HCT116 (cell line): ENCODE measurements at regions of chr20 and their contacts with region 1.

Region 1: DNA sequence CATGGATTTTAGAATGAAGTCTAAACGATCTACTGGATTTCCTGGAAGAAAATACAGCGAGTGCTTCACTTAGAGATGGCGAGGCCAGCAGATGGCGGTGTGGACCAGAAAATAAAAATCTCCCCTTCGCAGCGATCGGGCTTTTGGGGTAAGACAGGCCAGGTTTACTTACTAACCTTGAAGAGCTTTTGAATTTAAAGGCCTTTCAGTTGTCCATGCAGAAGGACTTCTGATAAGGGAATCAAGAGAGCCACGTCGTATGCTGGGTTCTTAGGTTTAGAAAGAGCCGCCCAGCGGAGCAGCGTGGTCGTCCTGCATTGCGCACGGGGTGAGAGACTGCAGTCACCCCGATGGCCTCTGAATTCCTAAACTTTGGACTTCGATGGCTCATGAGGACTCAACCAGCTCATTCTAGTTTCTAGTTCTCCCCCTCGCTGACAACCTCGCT is 125.2 kb upstream of the RALGAPA2 start:
- DNase-seq: peak; percentile 38
- ATAC-seq: peak; percentile 89
- H3K4me3 ChIP-seq: no peak overlapping the region
- H3K27ac ChIP-seq: no peak overlapping the region
- H3K4me1 ChIP-seq: no peaks in the 10 kb centered on the region
- H3K27me3 ChIP-seq: no peaks in the 10 kb centered on the region
- CTCF ChIP-seq: peak; percentile 61 to 87 (median 66); a peak in 5 of 6 replicates
- POLR2A ChIP-seq: no peak
- RAD21 ChIP-seq: peak; percentile 71

Region 2: GRCh38 chr20:21235484-21236445 is 398.2 kb after region 1 on chr20:
- CTCF ChIA-PET with region 1: interaction called, 7 read pairs
- POLR2A ChIA-PET with region 1: no interaction called
- RAD21 ChIA-PET with region 1: no interaction called
- intact Hi-C with region 1: loop called (anchors 2 kb)
- DNase-seq: peak; percentile 51
- ATAC-seq: peak; percentile 92
- H3K4me3 ChIP-seq: no peak overlapping the region
- H3K27ac ChIP-seq: no peak overlapping the region
- H3K4me1 ChIP-seq: peaks cover 0 to 6% of the 10 kb centered on the region in 2 experiments; a peak in 1 of 4 replicates
- H3K27me3 ChIP-seq: no peaks in the 10 kb centered on the region
- CTCF ChIP-seq: peak; percentile 84 to 97 (median 91); a peak in 5 of 6 replicates
- POLR2A ChIP-seq: no peak
- RAD21 ChIP-seq: peak; percentile 66

Region 3: DNA sequence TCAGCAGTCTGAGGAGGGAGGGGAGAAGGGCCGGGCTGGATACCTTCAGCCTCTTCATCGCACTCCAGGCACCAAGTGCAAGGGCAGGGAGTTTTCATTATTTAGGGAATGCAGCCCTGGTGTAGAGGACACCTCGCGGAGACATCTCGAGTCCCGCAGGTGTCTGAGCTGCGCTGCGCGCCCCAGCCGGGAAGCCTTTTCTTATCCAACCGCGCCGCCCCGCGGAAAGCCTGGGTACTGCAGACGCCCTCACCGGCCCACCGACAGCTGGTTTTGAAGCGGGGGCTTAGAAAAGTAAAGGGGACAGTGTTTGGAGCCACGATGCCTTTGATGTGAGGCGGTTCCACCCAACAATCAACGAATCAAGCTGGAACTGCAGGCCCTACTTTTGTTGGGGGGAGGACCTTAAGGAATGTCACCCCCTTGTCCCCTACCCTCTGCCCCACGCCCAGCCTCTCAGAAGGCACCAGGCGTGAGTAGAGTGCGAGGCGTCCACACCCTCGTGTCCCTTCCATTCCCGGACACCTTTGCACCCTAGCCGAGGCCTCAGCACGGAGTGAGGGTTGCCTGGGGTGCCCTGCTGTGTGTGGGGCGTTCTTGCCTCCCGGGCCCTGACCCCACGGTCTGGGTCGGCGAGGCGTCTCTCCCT is 667.7 kb after region 1 on chr20:
- CTCF ChIA-PET with region 1: interaction called, 23 read pairs
- POLR2A ChIA-PET with region 1: no interaction called
- RAD21 ChIA-PET with region 1: no interaction called
- intact Hi-C with region 1: loop called (anchors 1 kb)
- DNase-seq: peak; percentile 28
- ATAC-seq: peak; percentile 60
- H3K4me3 ChIP-seq: peak overlapping the region; percentile 60 to 71
- H3K27ac ChIP-seq: peak overlapping the region; percentile 85
- H3K4me1 ChIP-seq: peaks cover 3 to 20% of the 10 kb centered on the region in 2 experiments; a peak in 3 of 4 replicates
- H3K27me3 ChIP-seq: no peaks in the 10 kb centered on the region
- CTCF ChIP-seq: peak; percentile 90 to 98 (median 95)
- POLR2A ChIP-seq: no peak
- RAD21 ChIP-seq: peak; percentile 96

Region 4: DNA sequence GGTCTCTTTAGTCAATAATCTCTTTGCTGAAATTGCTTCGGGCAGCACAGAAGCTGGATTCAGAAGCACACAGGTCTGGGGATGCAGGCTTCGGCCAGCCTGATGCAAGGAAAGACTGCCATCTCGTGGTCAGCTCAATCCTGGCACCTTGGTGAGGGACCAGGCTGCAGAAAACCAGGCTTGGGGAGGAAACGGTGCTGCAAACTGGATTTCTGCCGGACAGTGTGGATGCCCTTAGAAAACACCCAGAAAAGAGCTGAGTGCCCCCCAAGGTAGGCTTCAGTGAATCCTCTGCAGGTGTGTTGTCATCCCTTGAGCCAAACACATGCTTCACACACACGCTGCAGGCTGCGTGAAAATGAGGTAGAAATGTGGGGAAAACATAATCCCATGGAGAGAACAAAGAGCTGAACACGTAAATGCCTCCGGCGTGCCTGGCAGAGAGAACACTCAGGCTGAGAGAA is 778.1 kb after region 1 on chr20:
- CTCF ChIA-PET with region 1: interaction called, 16 read pairs
- POLR2A ChIA-PET with region 1: no interaction called
- RAD21 ChIA-PET with region 1: no interaction called
- intact Hi-C with region 1: loop called (anchors 1 kb)
- DNase-seq: peak; percentile 26
- ATAC-seq: peak; percentile 98
- H3K4me3 ChIP-seq: no peak overlapping the region
- H3K27ac ChIP-seq: no peak overlapping the region
- H3K4me1 ChIP-seq: no peaks in the 10 kb centered on the region; a peak in 1 of 4 replicates
- H3K27me3 ChIP-seq: peaks cover 4% of the 10 kb centered on the region; the same call in 1 of the 2 replicates
- CTCF ChIP-seq: peak; percentile 32 to 90 (median 85); a peak in 5 of 6 replicates
- POLR2A ChIP-seq: no peak
- RAD21 ChIP-seq: peak; percentile 68